Mucosa of descending colon (tissue), 3 donors: ENCODE measurements at regions of chr22 and their contacts with region 1.

Region 1: DNA sequence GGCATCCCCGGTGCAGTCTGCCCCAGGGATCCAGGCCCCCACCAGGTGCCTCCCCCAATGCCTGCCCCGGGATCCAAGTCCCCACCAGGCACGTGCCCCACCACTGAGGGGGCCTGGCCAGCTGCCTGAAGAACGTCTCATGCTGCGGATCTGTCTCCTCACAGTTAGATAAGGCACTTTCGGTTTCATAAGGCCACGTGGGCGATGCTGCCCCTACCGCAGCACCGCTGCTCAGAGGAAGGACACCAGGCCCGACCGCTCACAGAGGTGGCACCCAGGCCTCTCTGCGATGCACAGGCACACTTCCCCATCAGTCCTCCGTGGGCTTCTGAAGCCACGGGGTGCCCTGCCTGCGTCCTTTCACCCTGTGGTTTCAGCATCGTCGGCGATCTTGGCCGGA is 68.1 kb upstream of the BID start:
- DNase-seq: peak in 2 of 3 donors; percentile 40 to 55
- ATAC-seq: peak; percentile 82
- H3K4me3 ChIP-seq: no peak overlapping the region
- H3K4me1 ChIP-seq: no peaks in the 10 kb centered on the region
- CTCF ChIP-seq: no peak

Region 2: DNA sequence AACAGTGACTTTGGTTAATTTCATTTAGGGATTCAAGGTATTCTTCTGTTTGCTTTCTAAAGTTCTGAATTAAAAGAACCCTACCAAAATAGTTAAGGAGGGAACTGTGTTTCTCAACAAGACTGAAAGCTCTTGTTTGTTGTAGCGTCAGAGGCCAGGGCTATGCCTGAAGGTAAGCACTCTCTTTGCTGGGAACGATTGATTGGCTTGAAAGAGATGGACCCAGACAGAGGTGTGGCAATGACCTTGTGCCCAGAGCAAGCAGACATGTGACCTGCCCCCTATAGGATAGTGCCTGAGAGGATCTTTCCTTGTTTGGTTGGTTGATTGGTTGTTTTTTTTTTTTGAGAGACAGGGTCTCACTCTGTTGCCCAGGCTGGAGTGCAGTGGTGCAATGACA is 541.5 kb before region 1 on chr22:
- intact Hi-C with region 1: no loop called
- DNase-seq: no peak
- ATAC-seq: no peak
- H3K4me3 ChIP-seq: no peak overlapping the region
- H3K4me1 ChIP-seq: no peaks in the 10 kb centered on the region
- CTCF ChIP-seq: no peak

Region 3: DNA sequence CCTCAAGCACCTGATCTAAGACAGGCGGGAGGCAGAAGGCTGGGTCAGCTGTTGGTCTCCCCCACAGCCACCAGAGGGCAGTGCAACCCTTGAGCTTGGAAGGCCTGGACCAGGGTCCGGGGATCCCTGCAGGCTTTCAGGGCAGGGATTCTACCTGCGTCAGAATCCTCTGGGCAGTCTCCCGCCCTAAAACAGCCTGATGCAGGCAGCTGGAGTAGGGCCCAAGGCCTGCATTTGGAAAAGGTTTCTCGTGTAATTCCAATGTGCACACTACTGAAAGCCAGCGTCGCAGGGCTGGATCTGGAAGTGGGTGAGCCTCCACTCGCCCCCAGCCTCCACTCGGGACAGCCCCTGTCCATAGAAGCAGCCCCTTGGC is 99.9 kb before region 1 on chr22:
- intact Hi-C with region 1: no loop called
- DNase-seq: peak; percentile 69 to 76 (median 73)
- ATAC-seq: peak; percentile 88
- H3K4me3 ChIP-seq: no peak overlapping the region
- H3K4me1 ChIP-seq: no peaks in the 10 kb centered on the region
- CTCF ChIP-seq: peak; percentile 67

Region 4: DNA sequence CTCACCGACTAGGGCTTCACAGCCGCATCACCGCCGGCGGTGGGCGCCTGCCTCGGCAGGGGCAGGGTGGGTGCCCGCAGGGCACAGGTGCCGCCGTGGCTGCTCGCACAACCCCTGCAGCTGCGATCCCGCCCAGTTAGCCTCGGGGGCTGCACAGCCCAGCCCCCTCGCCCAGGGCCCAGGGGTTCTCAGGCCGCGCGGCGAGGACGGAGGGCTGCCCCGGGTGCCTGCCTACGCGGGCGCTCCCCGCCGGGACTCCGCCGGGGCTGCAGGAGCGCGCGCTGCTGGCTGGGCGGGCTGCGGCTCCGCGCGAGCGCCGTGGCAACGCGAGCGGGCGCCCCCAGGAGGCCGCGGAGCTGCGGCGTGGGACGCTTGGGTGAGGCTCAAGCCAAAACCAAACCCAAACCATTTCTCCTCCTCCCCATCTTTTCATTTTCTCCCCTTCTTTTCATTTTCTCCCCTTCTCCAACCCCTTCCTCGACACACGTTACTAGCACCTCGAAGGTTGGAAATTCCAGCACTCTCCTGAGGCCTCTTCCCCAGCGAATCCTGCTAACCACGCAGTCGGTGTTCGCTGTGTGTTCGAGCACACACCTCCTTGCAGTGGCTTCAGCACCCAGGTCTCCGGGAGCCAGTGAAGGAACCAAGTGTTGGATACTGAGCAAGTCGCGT is 182.0 kb after region 1 on chr22 and contains the start of gene MICAL3:
- intact Hi-C with region 1: loop called in 1 of 2 experiments (anchors 5 kb)
- DNase-seq: peak; percentile 70 to 84 (median 79)
- ATAC-seq: peak; percentile 91
- H3K4me3 ChIP-seq: peak within 1 kb of the TSS; percentile 29
- H3K4me1 ChIP-seq: peaks cover 10% of the 10 kb centered on the region
- CTCF ChIP-seq: peak; percentile 53
- total RNA-seq, gene MICAL3: 75.8 to 135 (median 129) TPM

Region 5: GRCh38 chr22:18091916-18092526 is 249.6 kb after region 1 on chr22:
- intact Hi-C with region 1: no loop called
- DNase-seq: peak; percentile 84 to 90 (median 87)
- ATAC-seq: peak; percentile 90
- H3K4me3 ChIP-seq: no peak overlapping the region
- H3K4me1 ChIP-seq: peaks cover 21% of the 10 kb centered on the region
- CTCF ChIP-seq: no peak